ENCODE measurements at regions of chr3 and their contacts with region 1.

Region 1: GRCh38 chr3:183385698-183386613 is 42.5 kb downstream of the MCF2L2 start:
- DNase-seq: peak; percentile 65
- CTCF ChIP-seq: peak; percentile 56

Region 2: DNA sequence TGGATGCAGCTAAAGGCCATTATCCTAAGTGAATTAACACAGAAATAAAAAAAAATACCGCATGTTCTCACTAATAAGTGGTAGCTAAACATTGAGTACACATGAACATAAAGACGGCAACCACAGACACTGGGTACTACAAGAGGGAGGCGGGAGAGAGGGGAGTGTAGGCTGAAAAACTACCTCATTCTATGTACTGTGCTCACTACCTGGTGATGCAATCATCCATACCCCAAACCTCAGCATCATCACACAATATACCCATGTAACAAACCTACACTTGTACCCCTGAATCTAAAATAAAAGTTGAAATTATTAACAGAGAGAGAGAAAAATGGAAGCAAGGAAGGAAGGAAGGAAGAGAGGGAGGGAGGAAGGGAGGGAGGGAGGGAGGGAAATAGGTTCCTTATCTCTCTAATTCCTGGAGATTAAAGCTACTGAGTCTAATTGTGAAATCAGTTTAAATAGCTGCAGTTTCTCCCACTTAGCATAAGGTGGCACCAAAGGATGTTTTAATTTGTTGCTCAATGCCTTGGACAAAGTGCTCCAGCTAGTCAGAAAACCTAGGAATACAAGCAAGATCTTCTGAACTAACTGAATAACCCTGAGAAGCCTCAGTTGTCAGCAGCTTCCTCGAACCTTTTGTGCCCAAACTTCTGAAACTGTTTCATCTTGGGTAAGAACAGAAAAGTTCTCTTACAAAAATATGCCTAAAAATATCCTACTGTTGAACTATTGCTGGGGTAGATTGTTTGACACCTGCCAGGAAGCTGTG is 672.0 kb before region 1 on chr3:
- in situ Hi-C with region 1: loop called (anchors 25 kb)
- DNase-seq: peak; percentile 58
- CTCF ChIP-seq: peak; percentile 74

Region 3: GRCh38 chr3:182889948-182890629 is 495.9 kb before region 1 on chr3:
- in situ Hi-C with region 1: loop called (anchors 10 kb)
- DNase-seq: no peak
- CTCF ChIP-seq: no peak

Region 4: DNA sequence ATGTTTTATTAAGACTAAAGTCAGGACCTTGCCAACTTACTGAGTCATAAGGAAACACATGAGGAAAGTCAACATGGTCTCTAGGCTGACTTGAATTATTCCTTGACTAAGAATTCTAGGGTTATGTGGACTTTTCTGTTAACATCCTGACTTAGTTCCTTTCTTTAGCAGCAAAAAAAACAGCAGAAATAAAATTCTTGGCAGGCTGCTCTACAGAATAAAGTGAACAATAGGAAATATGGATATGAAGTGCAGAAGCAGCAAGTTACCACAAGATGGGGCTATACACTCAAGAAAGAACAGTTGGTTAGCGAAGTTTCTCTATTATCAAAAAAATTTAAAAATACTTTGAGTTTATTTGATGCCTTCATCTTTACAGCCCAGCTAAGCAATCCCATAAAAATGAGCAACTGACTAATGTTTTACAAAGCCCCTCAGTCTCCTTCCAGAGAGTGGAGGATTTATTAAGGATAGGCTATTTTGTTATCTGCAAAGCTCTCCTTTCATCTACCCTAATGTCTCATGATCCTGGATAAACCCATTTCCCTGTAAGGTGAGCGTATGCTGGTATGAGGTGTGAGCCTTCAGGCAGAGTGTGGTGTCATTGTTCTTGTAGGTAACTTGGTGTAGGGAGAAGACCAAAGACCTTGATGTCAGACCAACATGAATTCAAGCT is 263.6 kb before region 1 on chr3:
- in situ Hi-C with region 1: loop called (anchors 10 kb)
- DNase-seq: peak; percentile 67
- CTCF ChIP-seq: peak; percentile 69

Region 5: GRCh38 chr3:183193818-183194689 is 191.9 kb before region 1 on chr3:
- in situ Hi-C with region 1: loop called (anchors 5 kb)
- DNase-seq: no peak
- CTCF ChIP-seq: no peak

Measured in GM13976 (cell line).